ENCODE measurements at regions of chr17 and their contacts with region 1.

Region 1: DNA sequence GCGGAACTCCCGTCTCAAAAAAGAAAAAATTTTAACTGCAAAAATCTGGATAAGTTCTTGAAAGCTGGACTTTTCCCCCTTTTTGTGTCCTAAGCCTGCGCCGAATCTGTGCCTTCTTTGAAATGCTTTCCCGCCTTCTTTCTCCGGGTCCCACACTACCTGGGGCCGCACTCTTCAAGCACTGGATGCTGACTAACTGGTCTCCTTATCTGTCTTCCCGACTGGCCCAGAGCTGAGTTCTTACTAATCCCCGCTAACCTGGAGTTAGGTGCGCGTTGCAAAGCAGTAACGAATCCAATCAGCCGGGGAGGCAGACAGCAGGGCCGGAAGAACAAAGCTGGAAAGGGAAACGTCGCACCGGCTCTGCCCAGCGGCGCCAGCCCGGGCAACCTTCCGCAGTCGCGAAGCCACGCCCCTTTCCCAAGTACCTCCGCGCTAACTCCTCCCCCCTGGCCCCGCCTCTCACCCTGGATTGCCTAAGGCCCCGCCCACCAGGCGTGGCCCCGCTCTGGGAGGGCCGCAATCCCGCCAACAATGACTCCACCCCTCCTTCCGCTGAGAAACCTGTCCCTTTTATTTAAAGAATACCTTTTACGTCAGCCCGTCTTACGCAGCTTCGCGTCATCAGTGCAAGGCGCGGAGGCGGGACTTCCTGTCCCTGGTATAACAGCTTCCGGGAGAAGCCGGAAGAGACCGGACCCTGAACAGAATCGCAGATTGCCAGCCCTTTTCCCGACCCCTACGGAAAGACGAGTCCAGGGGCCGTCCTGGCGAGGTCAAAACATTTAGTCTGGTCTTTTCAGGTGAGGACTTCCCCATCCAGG is at the start of gene TMUB2:
- DNase-seq: peak; percentile 99 to 100 (median 100)
- ATAC-seq: peak; percentile 99
- H3K4me3 ChIP-seq: peak within 1 kb of the TSS; percentile 100
- H3K4me3 Mint-ChIP-seq: peak within 1 kb of the TSS; percentile 94 to 100 (median 98)
- H3K27ac ChIP-seq: peak within 1 kb of the TSS; percentile 99
- H3K27ac Mint-ChIP-seq: peak within 1 kb of the TSS; percentile 97 to 100 (median 100)
- H3K4me1 ChIP-seq: peaks cover 23 to 35% of the 10 kb centered on the region in 2 donors
- H3K4me1 Mint-ChIP-seq: peaks cover 41 to 68% (median 51%) of the 10 kb centered on the region in 7 donors
- H3K27me3 ChIP-seq: no peaks in the 10 kb centered on the region
- H3K27me3 Mint-ChIP-seq: no peaks in the 10 kb centered on the region
- total RNA-seq, gene TMUB2: 34.9 to 56.0 (median 41.6) TPM

Region 2: GRCh38 chr17:43720311-43721060 is 466.0 kb before region 1 on chr17:
- CTCF ChIA-PET with region 1: no interaction called
- POLR2A ChIA-PET with region 1: no interaction called
- intact Hi-C with region 1: loop called in 1 of 2 experiments (anchors 2 kb)
- DNase-seq: peak; percentile 60 to 82 (median 74)
- ATAC-seq: peak; percentile 96
- H3K4me3 ChIP-seq: peak overlapping the region; percentile 96
- H3K4me3 Mint-ChIP-seq: peak overlapping the region; percentile 81 to 100 (median 96)
- H3K27ac ChIP-seq: peak overlapping the region; percentile 93
- H3K27ac Mint-ChIP-seq: peak overlapping the region; percentile 89 to 99 (median 95)
- H3K4me1 ChIP-seq: peaks cover 0 to 5% of the 10 kb centered on the region in 2 donors
- H3K4me1 Mint-ChIP-seq: peaks cover 5 to 18% (median 6%) of the 10 kb centered on the region in 7 donors
- H3K27me3 ChIP-seq: no peaks in the 10 kb centered on the region
- H3K27me3 Mint-ChIP-seq: peaks cover 1 to 23% (median 5%) of the 10 kb centered on the region in 5 donors

Region 3: DNA sequence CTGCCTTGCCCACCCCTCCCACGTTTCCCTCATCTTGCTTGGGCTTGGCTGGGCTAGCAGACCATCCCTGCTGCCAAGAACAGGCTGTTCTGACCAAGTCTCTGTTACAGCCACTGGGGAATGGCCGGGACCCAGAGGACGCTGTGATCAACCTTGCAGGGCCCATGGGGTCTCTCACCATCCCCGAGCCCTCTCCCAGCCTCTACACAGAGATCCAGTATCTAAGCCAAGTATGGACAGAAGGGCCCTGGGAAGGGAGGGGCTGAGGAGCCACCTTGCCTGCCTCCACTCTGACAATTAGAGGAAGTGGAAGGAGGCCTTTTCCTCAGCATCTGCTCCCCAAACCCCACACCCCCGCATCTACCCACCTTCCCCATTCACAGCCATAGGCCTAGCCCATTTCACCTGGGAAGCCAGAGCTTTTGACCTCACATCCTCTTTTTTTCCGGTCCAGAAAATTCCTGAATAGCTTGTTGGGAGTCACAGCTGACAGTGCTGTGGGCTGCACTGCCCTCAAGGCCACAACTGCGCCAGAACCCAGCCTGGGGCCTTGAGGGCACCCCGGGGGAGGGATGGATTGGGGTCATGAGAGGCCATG is 325.4 kb before region 1 on chr17:
- CTCF ChIA-PET with region 1: no interaction called
- POLR2A ChIA-PET with region 1: no interaction called
- intact Hi-C with region 1: no loop called
- DNase-seq: no peak
- ATAC-seq: no peak
- H3K4me3 ChIP-seq: no peak overlapping the region
- H3K4me3 Mint-ChIP-seq: no peak overlapping the region
- H3K27ac ChIP-seq: no peak overlapping the region
- H3K27ac Mint-ChIP-seq: no peak overlapping the region
- H3K4me1 ChIP-seq: no peaks in the 10 kb centered on the region
- H3K4me1 Mint-ChIP-seq: peaks cover 0 to 2% (median 0%) of the 10 kb centered on the region in 7 donors
- H3K27me3 ChIP-seq: no peaks in the 10 kb centered on the region
- H3K27me3 Mint-ChIP-seq: peaks cover 0 to 9% (median 0%) of the 10 kb centered on the region in 5 donors

Region 4: DNA sequence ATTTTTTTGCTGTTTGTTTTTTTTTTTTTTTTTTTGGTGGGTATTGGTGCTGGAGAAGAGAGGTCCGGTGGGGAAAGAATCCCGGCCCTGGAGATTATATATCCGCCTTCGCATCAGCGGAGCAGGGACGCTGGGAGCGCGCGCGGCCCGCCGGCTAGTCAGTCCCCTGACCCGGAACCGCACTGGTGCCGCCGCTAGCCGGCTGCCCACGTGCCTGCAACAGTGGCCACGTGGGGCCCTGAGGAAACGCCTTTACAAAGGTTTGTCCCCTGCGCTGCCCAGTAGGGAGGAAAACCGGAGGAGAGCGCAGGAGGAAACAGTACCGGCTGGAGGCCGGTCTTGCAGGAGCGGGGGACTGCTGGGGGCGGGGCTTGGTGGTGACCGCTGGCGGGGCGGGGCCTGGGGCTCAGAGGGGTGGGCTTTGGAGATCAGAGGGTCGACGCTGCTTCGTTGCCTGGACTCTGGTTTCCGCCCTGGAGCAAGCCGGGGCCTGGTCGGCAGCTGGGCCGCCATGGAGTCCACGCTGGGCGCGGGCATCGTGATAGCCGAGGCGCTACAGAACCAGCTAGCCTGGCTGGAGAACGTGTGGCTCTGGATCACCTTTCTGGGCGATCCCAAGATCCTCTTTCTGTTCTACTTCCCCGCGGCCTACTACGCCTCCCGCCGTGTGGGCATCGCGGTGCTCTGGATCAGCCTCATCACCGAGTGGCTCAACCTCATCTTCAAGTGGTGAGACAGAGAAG is 115.9 kb before region 1 on chr17 and contains the start of gene G6PC3:
- CTCF ChIA-PET with region 1: no interaction called
- POLR2A ChIA-PET with region 1: interaction called, 6 read pairs
- intact Hi-C with region 1: loop called (anchors 1 to 2 kb)
- DNase-seq: peak; percentile 35 to 86 (median 49)
- ATAC-seq: peak; percentile 67
- H3K4me3 ChIP-seq: peak within 1 kb of the TSS; percentile 75
- H3K4me3 Mint-ChIP-seq: peak within 1 kb of the TSS; percentile 91 to 97 (median 94)
- H3K27ac ChIP-seq: peak within 1 kb of the TSS; percentile 83
- H3K27ac Mint-ChIP-seq: peak within 1 kb of the TSS; percentile 29 to 96 (median 93)
- H3K4me1 ChIP-seq: peaks cover 21 to 24% of the 10 kb centered on the region in 2 donors
- H3K4me1 Mint-ChIP-seq: peaks cover 31 to 49% (median 36%) of the 10 kb centered on the region in 7 donors
- H3K27me3 ChIP-seq: no peaks in the 10 kb centered on the region
- H3K27me3 Mint-ChIP-seq: no peaks in the 10 kb centered on the region
- total RNA-seq, gene G6PC3: 9.4 to 25.8 (median 13.9) TPM

Region 5: GRCh38 chr17:44199553-44200477 is 13.3 kb after region 1 on chr17 and contains the start of gene ATXN7L3:
- CTCF ChIA-PET with region 1: interaction called, 9 read pairs
- POLR2A ChIA-PET with region 1: interaction called, 128 read pairs
- intact Hi-C with region 1: loop called (anchors 1 kb)
- DNase-seq: peak; percentile 90 to 99 (median 98)
- ATAC-seq: peak; percentile 91
- H3K4me3 ChIP-seq: peak within 1 kb of the TSS; percentile 68
- H3K4me3 Mint-ChIP-seq: peak within 1 kb of the TSS; percentile 90 to 97 (median 92)
- H3K27ac ChIP-seq: peak within 1 kb of the TSS; percentile 93
- H3K27ac Mint-ChIP-seq: peak within 1 kb of the TSS; percentile 91 to 97 (median 96)
- H3K4me1 ChIP-seq: peaks cover 27 to 34% of the 10 kb centered on the region in 2 donors
- H3K4me1 Mint-ChIP-seq: peaks cover 39 to 61% (median 53%) of the 10 kb centered on the region in 7 donors
- H3K27me3 ChIP-seq: no peaks in the 10 kb centered on the region
- H3K27me3 Mint-ChIP-seq: no peaks in the 10 kb centered on the region
- total RNA-seq, gene ATXN7L3: 93.5 to 130 (median 124) TPM

Region 6: GRCh38 chr17:44218344-44219107 is 32.0 kb after region 1 on chr17:
- CTCF ChIA-PET with region 1: interaction called, 3 read pairs
- POLR2A ChIA-PET with region 1: interaction called, 39 read pairs
- intact Hi-C with region 1: loop called (anchors 1 kb)
- DNase-seq: peak; percentile 82 to 93 (median 92)
- ATAC-seq: peak; percentile 80
- H3K4me3 ChIP-seq: peak overlapping the region; percentile 68
- H3K4me3 Mint-ChIP-seq: peak overlapping the region; percentile 76 to 94 (median 86)
- H3K27ac ChIP-seq: peak overlapping the region; percentile 90
- H3K27ac Mint-ChIP-seq: peak overlapping the region; percentile 84 to 99 (median 97)
- H3K4me1 ChIP-seq: peaks cover 38 to 42% of the 10 kb centered on the region in 2 donors
- H3K4me1 Mint-ChIP-seq: peaks cover 48 to 53% (median 52%) of the 10 kb centered on the region in 7 donors
- H3K27me3 ChIP-seq: no peaks in the 10 kb centered on the region
- H3K27me3 Mint-ChIP-seq: no peaks in the 10 kb centered on the region

Region 7: DNA sequence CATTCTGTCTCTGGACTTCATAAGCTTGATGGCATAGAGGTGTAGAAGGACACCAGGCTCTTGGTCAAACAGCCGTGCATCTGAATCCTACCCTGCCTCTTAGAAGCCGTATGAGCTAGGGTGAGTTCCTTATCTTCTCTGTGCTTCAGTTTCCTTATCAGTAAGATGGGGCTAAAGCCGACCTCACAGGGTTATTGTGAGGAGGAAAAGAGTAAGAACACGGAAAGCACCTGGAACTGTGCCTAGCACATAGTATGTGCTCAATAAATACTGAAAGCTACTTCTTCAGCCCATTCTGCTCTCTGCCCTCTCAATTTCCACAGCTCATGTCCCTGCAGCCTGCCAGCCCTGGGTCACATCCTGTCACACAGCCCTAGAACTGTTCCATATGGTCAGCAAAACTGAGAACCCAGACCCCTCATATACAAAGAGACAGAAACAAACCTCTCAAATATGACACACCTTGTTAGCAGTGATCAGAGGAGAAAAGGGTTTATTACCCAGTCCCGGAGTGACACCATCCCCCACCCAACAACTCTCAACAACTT is 50.0 kb after region 1 on chr17:
- CTCF ChIA-PET with region 1: no interaction called
- POLR2A ChIA-PET with region 1: no interaction called
- intact Hi-C with region 1: no loop called
- DNase-seq: no peak
- ATAC-seq: no peak
- H3K4me3 ChIP-seq: no peak overlapping the region
- H3K4me3 Mint-ChIP-seq: no peak overlapping the region
- H3K27ac ChIP-seq: no peak overlapping the region
- H3K27ac Mint-ChIP-seq: no peak overlapping the region
- H3K4me1 ChIP-seq: no peaks in the 10 kb centered on the region
- H3K4me1 Mint-ChIP-seq: peaks cover 0 to 7% (median 4%) of the 10 kb centered on the region in 7 donors
- H3K27me3 ChIP-seq: no peaks in the 10 kb centered on the region
- H3K27me3 Mint-ChIP-seq: peaks cover 0 to 7% (median 0%) of the 10 kb centered on the region in 5 donors

Region 8: GRCh38 chr17:44324571-44325275 is 138.2 kb after region 1 on chr17 and contains the start of gene SLC25A39:
- CTCF ChIA-PET with region 1: interaction called, 6 read pairs
- POLR2A ChIA-PET with region 1: interaction called, 25 read pairs
- intact Hi-C with region 1: loop called (anchors 1 kb)
- DNase-seq: peak; percentile 87 to 99 (median 94)
- ATAC-seq: peak; percentile 91
- H3K4me3 ChIP-seq: peak within 1 kb of the TSS; percentile 98
- H3K4me3 Mint-ChIP-seq: peak within 1 kb of the TSS; percentile 90 to 96 (median 93)
- H3K27ac ChIP-seq: peak within 1 kb of the TSS; percentile 83
- H3K27ac Mint-ChIP-seq: peak within 1 kb of the TSS; percentile 89 to 98 (median 95)
- H3K4me1 ChIP-seq: peaks cover 13 to 17% of the 10 kb centered on the region in 2 donors
- H3K4me1 Mint-ChIP-seq: peaks cover 0 to 38% (median 19%) of the 10 kb centered on the region in 7 donors
- H3K27me3 ChIP-seq: no peaks in the 10 kb centered on the region
- H3K27me3 Mint-ChIP-seq: no peaks in the 10 kb centered on the region
- total RNA-seq, gene SLC25A39: 75.4 to 107 (median 101) TPM

Region 9: GRCh38 chr17:44503147-44504029 is 316.9 kb after region 1 on chr17 and contains the start of gene GPATCH8:
- CTCF ChIA-PET with region 1: no interaction called
- POLR2A ChIA-PET with region 1: interaction called, 3 read pairs
- intact Hi-C with region 1: loop called in 1 of 2 experiments (anchors 5 kb)
- DNase-seq: peak; percentile 87 to 97 (median 94)
- ATAC-seq: peak; percentile 94
- H3K4me3 ChIP-seq: peak within 1 kb of the TSS; percentile 84
- H3K4me3 Mint-ChIP-seq: peak within 1 kb of the TSS; percentile 92 to 99 (median 98)
- H3K27ac ChIP-seq: peak within 1 kb of the TSS; percentile 93
- H3K27ac Mint-ChIP-seq: peak within 1 kb of the TSS; percentile 95 to 99 (median 97)
- H3K4me1 ChIP-seq: peaks cover 18 to 25% of the 10 kb centered on the region in 2 donors
- H3K4me1 Mint-ChIP-seq: peaks cover 24 to 50% (median 39%) of the 10 kb centered on the region in 7 donors
- H3K27me3 ChIP-seq: no peaks in the 10 kb centered on the region
- H3K27me3 Mint-ChIP-seq: peaks cover 0 to 5% (median 4%) of the 10 kb centered on the region in 5 donors
- total RNA-seq, gene GPATCH8: 45.0 to 88.5 (median 82.9) TPM

Region 10: GRCh38 chr17:44614862-44615261 is 428.3 kb after region 1 on chr17:
- CTCF ChIA-PET with region 1: no interaction called
- POLR2A ChIA-PET with region 1: no interaction called
- intact Hi-C with region 1: no loop called
- DNase-seq: no peak
- ATAC-seq: no peak
- H3K4me3 ChIP-seq: no peak overlapping the region
- H3K4me3 Mint-ChIP-seq: no peak overlapping the region
- H3K27ac ChIP-seq: no peak overlapping the region
- H3K27ac Mint-ChIP-seq: no peak overlapping the region
- H3K4me1 ChIP-seq: no peaks in the 10 kb centered on the region
- H3K4me1 Mint-ChIP-seq: peaks cover 0 to 2% (median 0%) of the 10 kb centered on the region in 7 donors
- H3K27me3 ChIP-seq: no peaks in the 10 kb centered on the region
- H3K27me3 Mint-ChIP-seq: peaks cover 6 to 35% (median 18%) of the 10 kb centered on the region in 5 donors

Measured in naive thymus-derived CD4-positive, alpha-beta T cell (primary cell).